Right cardiac atrium (tissue), 5 donors: ENCODE measurements at regions of chr1 and their contacts with region 1.

Region 1: DNA sequence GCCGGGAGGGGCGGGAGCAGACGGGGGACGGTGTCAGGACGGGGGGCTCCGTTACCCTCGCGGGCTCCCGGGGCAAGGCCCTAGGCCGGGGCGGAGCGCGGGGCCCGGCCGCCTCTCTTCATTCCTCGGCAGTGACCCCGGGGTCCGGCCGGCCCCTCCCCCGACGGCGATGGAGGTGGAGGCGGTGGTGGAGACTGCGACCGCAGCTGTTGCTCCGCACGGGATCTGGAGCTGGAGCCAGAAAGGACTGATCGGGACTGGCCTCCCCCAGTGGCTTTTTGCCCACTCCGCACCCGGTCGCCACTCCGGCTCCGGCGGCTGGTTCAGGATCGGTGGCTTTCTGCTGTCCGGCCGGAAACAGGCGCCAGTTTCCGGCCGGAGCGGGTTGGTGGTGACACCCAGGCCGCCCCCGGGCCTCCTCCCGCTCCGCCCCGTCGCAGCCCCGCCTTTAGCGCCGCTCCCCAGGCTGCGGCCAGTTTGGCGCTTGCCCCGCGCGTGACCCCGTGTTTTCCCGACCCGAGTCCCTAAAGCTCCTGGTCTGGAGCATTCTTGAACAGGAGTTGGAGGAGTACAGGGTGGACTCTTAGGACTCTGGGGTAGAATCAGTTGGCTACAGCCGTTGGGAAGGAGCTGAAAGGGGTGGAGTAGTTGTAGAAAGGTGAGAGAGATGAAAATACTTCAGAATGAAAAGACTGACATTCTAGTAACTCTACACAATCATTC is at the start of gene OTUD7B:
- DNase-seq: peak; percentile 90 to 96 (median 95)
- ATAC-seq: peak; percentile 95 to 96
- H3K4me3 ChIP-seq: peak within 1 kb of the TSS; percentile 81
- H3K27ac ChIP-seq: peak within 1 kb of the TSS; percentile 95
- H3K4me1 ChIP-seq: no peaks in the 10 kb centered on the region
- H3K27me3 ChIP-seq: no peaks in the 10 kb centered on the region
- total RNA-seq, gene OTUD7B: 23.3 to 27.2 (median 26.5) TPM

Region 2: GRCh38 chr1:149927503-149928387 is 82.8 kb before region 1 on chr1 and contains the start of gene SF3B4:
- intact Hi-C with region 1: no loop called
- DNase-seq: peak; percentile 96 to 98 (median 98)
- ATAC-seq: peak; percentile 98
- H3K4me3 ChIP-seq: peak within 1 kb of the TSS; percentile 80
- H3K27ac ChIP-seq: peak within 1 kb of the TSS; percentile 92
- H3K4me1 ChIP-seq: peaks cover 4% of the 10 kb centered on the region
- H3K27me3 ChIP-seq: no peaks in the 10 kb centered on the region
- total RNA-seq, gene SF3B4: 26.1 to 30.8 (median 29.5) TPM

Region 3: GRCh38 chr1:149949911-149950310 is 60.6 kb before region 1 on chr1:
- intact Hi-C with region 1: no loop called
- DNase-seq: no peak
- ATAC-seq: peak in 1 of 2 donors; percentile 45
- H3K4me3 ChIP-seq: no peak overlapping the region
- H3K27ac ChIP-seq: no peak overlapping the region
- H3K4me1 ChIP-seq: no peaks in the 10 kb centered on the region
- H3K27me3 ChIP-seq: no peaks in the 10 kb centered on the region

Region 4: DNA sequence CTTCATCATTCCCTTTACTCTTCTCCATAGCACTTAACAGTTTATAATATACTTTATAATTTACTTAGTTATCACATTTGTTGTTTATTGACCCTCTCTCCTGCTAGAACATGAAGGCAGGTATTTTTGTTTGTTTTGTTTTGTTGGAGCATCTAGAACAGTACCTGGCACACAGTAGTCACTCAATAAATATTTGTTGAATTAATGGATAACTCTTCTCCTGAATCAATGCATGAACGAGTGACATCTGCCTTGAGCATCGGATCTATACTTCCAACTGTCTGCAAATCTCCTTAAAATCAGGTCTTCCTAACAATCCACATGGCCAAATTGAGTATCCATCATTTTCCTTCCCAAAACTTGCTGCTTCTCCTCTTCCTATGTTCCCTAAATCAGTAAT is 38.0 kb before region 1 on chr1:
- intact Hi-C with region 1: loop called in 1 of 4 experiments (anchors 5 kb)
- DNase-seq: no peak
- ATAC-seq: no peak
- H3K4me3 ChIP-seq: no peak overlapping the region
- H3K27ac ChIP-seq: no peak overlapping the region
- H3K4me1 ChIP-seq: no peaks in the 10 kb centered on the region
- H3K27me3 ChIP-seq: no peaks in the 10 kb centered on the region

Region 5: GRCh38 chr1:150067184-150068036 is 56.9 kb after region 1 on chr1 and contains the start of gene VPS45:
- intact Hi-C with region 1: loop called in 1 of 4 experiments (anchors 10 kb)
- DNase-seq: peak; percentile 94 to 96 (median 95)
- ATAC-seq: peak; percentile 99
- H3K4me3 ChIP-seq: peak within 1 kb of the TSS; percentile 97
- H3K27ac ChIP-seq: peak within 1 kb of the TSS; percentile 99
- H3K4me1 ChIP-seq: peaks cover 1% of the 10 kb centered on the region
- H3K27me3 ChIP-seq: no peaks in the 10 kb centered on the region
- total RNA-seq, gene VPS45: 46.3 to 54.3 (median 48.8) TPM